SK-N-SH (cell line): ENCODE measurements at regions of chr7 and their contacts with region 1.

Region 1: DNA sequence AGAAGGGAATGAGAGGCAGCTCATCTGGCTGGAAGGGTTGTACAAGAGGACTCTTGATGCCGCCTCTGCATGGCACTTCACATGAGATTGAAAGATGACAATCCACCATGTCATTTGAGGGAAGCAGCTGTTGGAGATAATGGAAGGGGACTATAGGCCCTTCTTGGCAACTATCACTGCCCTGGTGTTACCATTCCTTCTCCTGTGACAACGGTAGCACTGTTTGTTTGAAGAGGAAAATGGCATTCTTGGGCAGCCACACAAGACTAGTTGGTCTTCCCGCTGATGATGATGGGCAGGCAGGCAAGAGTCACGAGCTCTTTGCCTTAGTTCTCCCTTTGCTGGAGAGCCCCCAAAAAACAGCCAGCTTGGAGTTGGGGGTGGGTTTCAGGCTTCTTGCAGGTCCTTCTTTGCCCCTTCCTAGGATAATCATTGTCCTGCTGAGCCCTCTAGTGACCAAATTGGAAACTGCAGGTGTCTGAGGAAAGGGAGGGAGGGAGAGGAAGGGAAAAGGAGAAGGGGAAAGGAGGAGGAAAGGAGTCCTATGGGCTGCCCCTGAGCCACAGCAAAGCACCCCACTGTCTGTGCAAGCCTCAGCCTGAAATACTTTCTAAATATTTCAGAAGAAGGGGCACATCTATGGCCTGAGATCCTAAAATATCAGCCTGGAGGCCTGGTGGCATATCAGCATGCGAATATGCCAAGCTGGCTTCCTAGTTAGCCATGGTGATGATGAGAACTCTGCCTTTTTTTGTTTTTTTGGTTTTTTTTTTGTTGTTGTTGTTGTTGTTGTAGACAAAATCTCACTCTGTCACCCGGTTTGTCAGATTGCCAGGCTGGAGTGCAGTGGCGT is 165.6 kb upstream of the KMT2E start:
- DNase-seq: peak; percentile 73
- H3K4me3 ChIP-seq: no peak overlapping the region; a peak in 1 of 4 replicates
- H3K27ac ChIP-seq: no peak overlapping the region
- H3K4me1 ChIP-seq: peaks cover 0 to 4% of the 10 kb centered on the region in 2 experiments; a peak in 1 of 4 replicates
- H3K27me3 ChIP-seq: peaks cover 63% of the 10 kb centered on the region
- CTCF ChIP-seq: peak; percentile 99
- EP300 ChIP-seq: no peak
- RAD21 ChIP-seq: peak; percentile 89

Region 2: GRCh38 chr7:103524042-103524907 is 1324.1 kb before region 1 on chr7:
- CTCF ChIA-PET with region 1: interaction called, 19 read pairs
- POLR2A ChIA-PET with region 1: no interaction called
- DNase-seq: peak; percentile 72
- H3K4me3 ChIP-seq: no peak overlapping the region; a peak in 1 of 4 replicates
- H3K27ac ChIP-seq: no peak overlapping the region
- H3K4me1 ChIP-seq: peaks cover 0 to 5% of the 10 kb centered on the region in 2 experiments; a peak in 1 of 4 replicates
- H3K27me3 ChIP-seq: no peaks in the 10 kb centered on the region
- CTCF ChIP-seq: peak; percentile 77
- EP300 ChIP-seq: no peak
- RAD21 ChIP-seq: peak; percentile 99

Region 3: GRCh38 chr7:104252404-104253134 is 595.8 kb before region 1 on chr7:
- CTCF ChIA-PET with region 1: interaction called, 11 read pairs
- POLR2A ChIA-PET with region 1: no interaction called
- DNase-seq: no peak
- H3K4me3 ChIP-seq: no peak overlapping the region
- H3K27ac ChIP-seq: no peak overlapping the region
- H3K4me1 ChIP-seq: no peaks in the 10 kb centered on the region
- H3K27me3 ChIP-seq: peaks cover 7% of the 10 kb centered on the region; the same call in 1 of the 2 replicates
- CTCF ChIP-seq: peak; percentile 44
- EP300 ChIP-seq: no peak
- RAD21 ChIP-seq: peak; percentile 21

Region 4: DNA sequence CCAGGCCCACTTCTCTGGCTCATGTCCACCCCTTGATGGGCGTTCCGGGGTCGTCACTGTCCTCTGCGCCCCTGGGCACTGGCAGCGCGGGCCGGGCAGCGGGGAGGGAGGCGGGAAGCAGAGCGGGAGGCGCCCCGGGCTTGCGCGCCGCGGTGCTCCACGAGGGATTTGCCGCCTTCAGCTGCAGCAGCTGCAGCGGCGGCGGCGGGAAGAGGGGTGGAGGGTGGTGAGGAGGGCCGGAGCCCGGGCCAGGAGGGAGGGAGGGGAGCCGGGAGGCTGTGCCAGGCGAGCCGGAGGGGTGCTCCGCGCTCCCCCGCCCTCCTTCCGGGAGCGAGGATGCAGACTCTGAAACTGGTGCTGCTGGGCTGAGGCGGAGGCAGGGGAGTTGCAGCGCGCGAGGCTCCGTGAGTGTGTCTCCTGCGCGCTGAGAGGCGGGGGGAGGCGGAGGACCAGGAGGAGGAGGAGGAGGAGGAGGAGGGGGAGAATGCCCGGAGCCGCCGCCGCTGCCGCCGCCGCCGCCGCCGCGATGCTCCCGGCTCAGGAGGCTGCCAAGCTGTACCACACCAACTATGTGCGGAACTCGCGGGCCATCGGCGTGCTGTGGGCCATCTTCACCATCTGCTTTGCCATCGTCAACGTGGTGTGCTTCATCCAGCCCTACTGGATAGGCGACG is 519.9 kb before region 1 on chr7 and contains the start of gene LHFPL3:
- CTCF ChIA-PET with region 1: interaction called, 17 read pairs
- POLR2A ChIA-PET with region 1: no interaction called
- DNase-seq: peak; percentile 79
- H3K4me3 ChIP-seq: peak within 1 kb of the TSS; percentile 30 to 57
- H3K27ac ChIP-seq: no peak within 1 kb of the TSS
- H3K4me1 ChIP-seq: peaks cover 0 to 5% of the 10 kb centered on the region in 2 experiments; a peak in 1 of 4 replicates
- H3K27me3 ChIP-seq: peaks cover 43% of the 10 kb centered on the region
- CTCF ChIP-seq: no peak
- EP300 ChIP-seq: peak in 1 of 2 experiments; percentile 7; a peak in 1 of 4 replicates
- RAD21 ChIP-seq: no peak
- polyA plus RNA-seq, gene LHFPL3: not detected in 2 replicates

Region 5: GRCh38 chr7:104358446-104359145 is 489.8 kb before region 1 on chr7:
- CTCF ChIA-PET with region 1: interaction called, 15 read pairs
- POLR2A ChIA-PET with region 1: no interaction called
- DNase-seq: no peak
- H3K4me3 ChIP-seq: no peak overlapping the region
- H3K27ac ChIP-seq: no peak overlapping the region
- H3K4me1 ChIP-seq: no peaks in the 10 kb centered on the region
- H3K27me3 ChIP-seq: no peaks in the 10 kb centered on the region
- CTCF ChIP-seq: no peak
- EP300 ChIP-seq: no peak
- RAD21 ChIP-seq: no peak

Region 6: DNA sequence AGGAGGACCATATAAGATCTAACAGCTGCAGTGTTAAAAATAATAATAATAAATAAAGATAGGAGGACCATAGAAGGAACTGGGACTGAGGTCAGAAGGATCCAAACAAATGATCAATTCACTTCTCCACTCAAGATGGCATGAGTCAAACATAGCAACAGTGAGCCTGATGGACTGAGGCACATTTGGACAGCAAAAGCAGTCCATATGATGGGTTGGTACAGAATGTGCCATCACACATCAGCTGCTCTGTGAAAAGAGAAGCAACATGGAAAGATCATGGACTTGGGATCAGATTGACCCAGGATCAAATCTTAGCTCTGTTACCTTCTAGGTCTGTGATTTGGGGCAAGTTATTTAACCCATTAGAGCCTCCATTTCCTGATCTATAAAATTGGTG is 23.3 kb before region 1 on chr7:
- CTCF ChIA-PET with region 1: interaction called, 17 read pairs
- POLR2A ChIA-PET with region 1: no interaction called
- DNase-seq: no peak
- H3K4me3 ChIP-seq: no peak overlapping the region
- H3K27ac ChIP-seq: no peak overlapping the region
- H3K4me1 ChIP-seq: no peaks in the 10 kb centered on the region
- H3K27me3 ChIP-seq: peaks cover 8% of the 10 kb centered on the region
- CTCF ChIP-seq: no peak
- EP300 ChIP-seq: no peak
- RAD21 ChIP-seq: no peak